ENCODE measurements at regions of chr2 and their contacts with region 1.

Region 1: DNA sequence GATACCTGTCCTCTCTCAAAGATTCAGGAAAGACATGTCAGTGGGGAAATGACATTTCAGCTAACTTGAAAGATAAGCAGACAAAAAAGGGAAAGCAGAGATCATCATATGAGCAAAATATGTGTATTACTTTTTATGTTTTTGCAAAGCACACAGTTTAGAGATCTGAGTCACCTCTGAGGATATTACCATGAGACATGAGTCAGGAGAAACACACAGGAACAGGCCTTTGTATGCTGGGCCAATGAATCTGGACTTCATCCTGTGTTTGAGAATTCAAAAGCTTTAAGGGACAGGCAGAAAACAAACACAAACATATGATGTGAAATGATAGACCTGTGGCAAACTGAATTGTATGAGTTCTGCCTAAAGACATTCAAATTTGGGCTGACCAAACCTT is 306.0 kb upstream of the EPC2 start:
- DNase-seq: peak; percentile 42
- H3K4me3 ChIP-seq: no peak overlapping the region
- CTCF ChIP-seq: no peak

Region 2: GRCh38 chr2:148303161-148303560 is 35.4 kb before region 1 on chr2:
- in situ Hi-C with region 1: loop called (anchors 5 kb)
- DNase-seq: peak; percentile 76
- H3K4me3 ChIP-seq: no peak overlapping the region
- CTCF ChIP-seq: no peak

Region 3: GRCh38 chr2:148459377-148459778 is 120.8 kb after region 1 on chr2:
- in situ Hi-C with region 1: no loop called
- DNase-seq: no peak
- H3K4me3 ChIP-seq: no peak overlapping the region
- CTCF ChIP-seq: no peak